ENCODE measurements at regions of chr3 and their contacts with region 1.

Region 1: GRCh38 chr3:85030052-85030451 is 71.3 kb downstream of the CADM2 start:
- DNase-seq: no peak
- ATAC-seq: no peak
- H3K4me3 ChIP-seq: no peak overlapping the region
- H3K4me3 Mint-ChIP-seq: no peak overlapping the region
- H3K27ac ChIP-seq: no peak overlapping the region
- H3K27ac Mint-ChIP-seq: no peak overlapping the region
- H3K4me1 ChIP-seq: no peaks in the 10 kb centered on the region
- H3K4me1 Mint-ChIP-seq: no peaks in the 10 kb centered on the region
- H3K27me3 ChIP-seq: no peaks in the 10 kb centered on the region
- H3K27me3 Mint-ChIP-seq: no peaks in the 10 kb centered on the region

Region 2: GRCh38 chr3:85228966-85229365 is 198.9 kb after region 1 on chr3:
- CTCF ChIA-PET with region 1: no interaction called
- POLR2A ChIA-PET with region 1: no interaction called
- DNase-seq: no peak
- ATAC-seq: no peak
- H3K4me3 ChIP-seq: no peak overlapping the region
- H3K4me3 Mint-ChIP-seq: no peak overlapping the region
- H3K27ac ChIP-seq: no peak overlapping the region
- H3K27ac Mint-ChIP-seq: no peak overlapping the region
- H3K4me1 ChIP-seq: no peaks in the 10 kb centered on the region
- H3K4me1 Mint-ChIP-seq: no peaks in the 10 kb centered on the region
- H3K27me3 ChIP-seq: no peaks in the 10 kb centered on the region
- H3K27me3 Mint-ChIP-seq: no peaks in the 10 kb centered on the region

Region 3: DNA sequence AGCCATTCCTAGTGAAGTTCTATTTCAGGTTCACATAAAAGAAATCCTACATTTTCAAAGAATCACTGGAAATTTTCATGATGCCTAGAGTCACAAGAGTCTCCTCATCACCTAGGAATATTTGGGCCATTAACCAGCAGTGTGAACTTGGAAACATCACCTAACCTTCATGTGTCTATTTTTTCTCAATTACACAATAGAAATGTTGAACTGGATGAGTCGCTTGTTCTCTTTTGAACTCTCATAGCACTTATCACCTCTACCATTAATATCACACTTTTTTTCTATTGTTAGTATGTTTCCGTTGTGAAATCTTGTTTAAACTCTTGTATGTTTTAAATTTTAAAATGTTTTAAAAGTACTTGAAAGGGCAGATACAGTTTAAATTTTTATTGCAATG is 300.0 kb after region 1 on chr3:
- CTCF ChIA-PET with region 1: no interaction called
- POLR2A ChIA-PET with region 1: interaction called in 1 of 2 experiments, 10 read pairs
- DNase-seq: no peak
- ATAC-seq: no peak
- H3K4me3 ChIP-seq: no peak overlapping the region
- H3K4me3 Mint-ChIP-seq: no peak overlapping the region
- H3K27ac ChIP-seq: no peak overlapping the region
- H3K27ac Mint-ChIP-seq: no peak overlapping the region
- H3K4me1 ChIP-seq: no peaks in the 10 kb centered on the region
- H3K4me1 Mint-ChIP-seq: no peaks in the 10 kb centered on the region
- H3K27me3 ChIP-seq: no peaks in the 10 kb centered on the region
- H3K27me3 Mint-ChIP-seq: no peaks in the 10 kb centered on the region

Region 4: DNA sequence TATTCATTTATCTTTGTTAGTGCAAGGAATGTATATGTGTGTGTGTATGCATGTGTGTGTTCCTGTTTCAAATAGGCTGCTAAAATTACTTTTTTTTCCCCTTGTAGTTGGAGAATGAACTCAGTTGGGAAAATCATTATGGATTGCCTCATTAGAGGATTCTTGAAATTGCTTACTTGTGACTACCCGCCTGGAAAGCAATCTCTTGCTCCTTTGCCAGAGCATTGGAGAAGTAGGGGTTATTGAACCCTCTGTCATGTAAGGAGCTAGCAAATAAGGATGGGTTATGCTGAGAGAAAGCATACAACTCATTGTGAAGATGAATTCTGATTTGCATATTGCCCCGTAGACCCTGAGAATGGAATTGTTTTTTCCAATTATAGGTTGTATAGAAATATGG is 403.3 kb after region 1 on chr3:
- CTCF ChIA-PET with region 1: no interaction called
- POLR2A ChIA-PET with region 1: no interaction called
- DNase-seq: no peak
- ATAC-seq: no peak
- H3K4me3 ChIP-seq: no peak overlapping the region
- H3K4me3 Mint-ChIP-seq: no peak overlapping the region
- H3K27ac ChIP-seq: no peak overlapping the region
- H3K27ac Mint-ChIP-seq: no peak overlapping the region
- H3K4me1 ChIP-seq: no peaks in the 10 kb centered on the region
- H3K4me1 Mint-ChIP-seq: no peaks in the 10 kb centered on the region
- H3K27me3 ChIP-seq: no peaks in the 10 kb centered on the region
- H3K27me3 Mint-ChIP-seq: no peaks in the 10 kb centered on the region

Measured in T-cell (primary cell).